Naive thymus-derived CD4-positive, alpha-beta T cell (primary cell): ENCODE measurements at regions of chr17 and their contacts with region 1.

Region 1: GRCh38 chr17:1628856-1629646 is 417 bp upstream of the SLC43A2 start:
- DNase-seq: peak; percentile 69 to 89 (median 84)
- ATAC-seq: peak; percentile 84
- H3K4me3 ChIP-seq: peak overlapping the region; percentile 83
- H3K4me3 Mint-ChIP-seq: peak overlapping the region; percentile 92 to 96 (median 94)
- H3K27ac ChIP-seq: peak overlapping the region; percentile 74
- H3K27ac Mint-ChIP-seq: peak overlapping the region; percentile 73 to 95 (median 87)
- H3K4me1 ChIP-seq: peaks cover 5 to 20% of the 10 kb centered on the region in 2 donors
- H3K4me1 Mint-ChIP-seq: peaks cover 17 to 26% (median 22%) of the 10 kb centered on the region in 7 donors
- H3K27me3 ChIP-seq: no peaks in the 10 kb centered on the region
- H3K27me3 Mint-ChIP-seq: peaks cover 0 to 59% (median 0%) of the 10 kb centered on the region in 5 donors

Region 2: GRCh38 chr17:1399679-1400512 is 229.2 kb before region 1 on chr17 and contains the start of gene YWHAE:
- CTCF ChIA-PET with region 1: no interaction called
- POLR2A ChIA-PET with region 1: no interaction called
- intact Hi-C with region 1: loop called in 1 of 2 experiments (anchors 1 kb)
- DNase-seq: peak; percentile 89 to 97 (median 94)
- ATAC-seq: peak; percentile 93
- H3K4me3 ChIP-seq: peak within 1 kb of the TSS; percentile 100
- H3K4me3 Mint-ChIP-seq: peak within 1 kb of the TSS; percentile 97 to 100 (median 99)
- H3K27ac ChIP-seq: peak within 1 kb of the TSS; percentile 98
- H3K27ac Mint-ChIP-seq: peak within 1 kb of the TSS; percentile 97 to 100 (median 99)
- H3K4me1 ChIP-seq: peaks cover 23 to 24% of the 10 kb centered on the region in 2 donors
- H3K4me1 Mint-ChIP-seq: peaks cover 18 to 45% (median 38%) of the 10 kb centered on the region in 7 donors
- H3K27me3 ChIP-seq: no peaks in the 10 kb centered on the region
- H3K27me3 Mint-ChIP-seq: peaks cover 0 to 6% (median 0%) of the 10 kb centered on the region in 5 donors
- total RNA-seq, gene YWHAE: 119 to 317 (median 127) TPM

Region 3: GRCh38 chr17:1561400-1562175 is 67.5 kb before region 1 on chr17:
- CTCF ChIA-PET with region 1: interaction called, 3 read pairs
- POLR2A ChIA-PET with region 1: interaction called, 8 read pairs
- intact Hi-C with region 1: loop called (anchors 1 kb)
- DNase-seq: peak in 8 of 9 donors; percentile 28 to 58 (median 36)
- ATAC-seq: peak; percentile 37
- H3K4me3 ChIP-seq: peak overlapping the region; percentile 39
- H3K4me3 Mint-ChIP-seq: peak overlapping the region; percentile 73 to 89 (median 82)
- H3K27ac ChIP-seq: peak overlapping the region; percentile 76
- H3K27ac Mint-ChIP-seq: peak overlapping the region in 8 of 9 donors; percentile 54 to 90 (median 76)
- H3K4me1 ChIP-seq: peaks cover 9 to 12% of the 10 kb centered on the region in 2 donors
- H3K4me1 Mint-ChIP-seq: peaks cover 25 to 54% (median 43%) of the 10 kb centered on the region in 7 donors
- H3K27me3 ChIP-seq: no peaks in the 10 kb centered on the region
- H3K27me3 Mint-ChIP-seq: peaks cover 0 to 13% (median 0%) of the 10 kb centered on the region in 5 donors

Region 4: GRCh38 chr17:1643293-1643998 is 14.4 kb after region 1 on chr17:
- CTCF ChIA-PET with region 1: interaction called, 7 read pairs
- POLR2A ChIA-PET with region 1: interaction called, 27 read pairs
- intact Hi-C with region 1: loop called (anchors 1 to 2 kb)
- DNase-seq: peak; percentile 57 to 86 (median 77)
- ATAC-seq: peak; percentile 82
- H3K4me3 ChIP-seq: peak overlapping the region; percentile 60
- H3K4me3 Mint-ChIP-seq: peak overlapping the region in 5 of 10 donors; percentile 75 to 89 (median 81)
- H3K27ac ChIP-seq: no peak overlapping the region
- H3K27ac Mint-ChIP-seq: peak overlapping the region in 1 of 9 donors; percentile 80
- H3K4me1 ChIP-seq: peaks cover 14 to 27% of the 10 kb centered on the region in 2 donors
- H3K4me1 Mint-ChIP-seq: peaks cover 0 to 27% (median 13%) of the 10 kb centered on the region in 7 donors
- H3K27me3 ChIP-seq: no peaks in the 10 kb centered on the region
- H3K27me3 Mint-ChIP-seq: peaks cover 0 to 2% (median 0%) of the 10 kb centered on the region in 5 donors

Region 5: DNA sequence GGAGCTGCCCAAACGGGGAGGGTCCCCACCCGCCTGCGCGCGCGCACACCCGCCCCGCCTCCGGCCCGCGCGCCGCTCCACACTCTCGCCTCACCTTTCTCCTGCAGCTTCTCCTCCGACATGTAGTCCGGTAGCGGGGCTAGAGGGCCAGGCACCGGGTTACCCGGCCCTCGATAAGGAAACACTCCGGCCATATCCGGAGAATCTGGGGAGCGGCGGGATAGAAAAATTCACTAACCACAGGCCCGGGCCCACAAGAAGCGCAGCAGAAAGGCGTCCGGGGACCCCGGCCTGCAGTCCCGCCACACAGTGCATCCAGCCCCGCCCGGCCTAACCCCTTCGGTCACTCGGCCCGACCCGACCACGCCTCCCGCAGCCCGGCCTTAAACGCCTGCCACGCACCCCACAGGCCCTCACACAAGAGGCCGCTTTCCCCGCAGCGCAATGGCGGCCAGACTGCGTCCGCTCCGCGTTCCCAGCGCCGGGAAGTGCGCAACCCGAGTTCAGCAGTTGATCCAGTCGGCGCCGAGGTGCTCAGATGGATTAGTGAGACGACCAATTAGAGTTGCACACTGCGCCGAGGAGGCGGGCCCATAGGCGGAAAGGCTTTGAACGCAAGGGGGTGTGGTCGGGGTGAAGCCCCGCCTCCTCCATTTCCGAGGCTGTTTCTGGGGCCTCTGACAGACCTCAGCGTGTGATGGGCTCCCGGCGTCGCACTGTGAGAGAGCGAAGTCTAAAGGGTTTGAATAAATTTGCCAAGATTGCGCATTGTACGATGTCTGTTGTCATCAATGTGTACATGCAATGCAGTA is 55.5 kb after region 1 on chr17 and contains the start of gene PRPF8:
- CTCF ChIA-PET with region 1: no interaction called
- POLR2A ChIA-PET with region 1: interaction called, 5 read pairs
- intact Hi-C with region 1: loop called in 1 of 2 experiments (anchors 1 kb)
- DNase-seq: peak; percentile 89 to 99 (median 99)
- ATAC-seq: peak; percentile 99
- H3K4me3 ChIP-seq: peak within 1 kb of the TSS; percentile 96
- H3K4me3 Mint-ChIP-seq: peak within 1 kb of the TSS; percentile 89 to 100 (median 97)
- H3K27ac ChIP-seq: peak within 1 kb of the TSS; percentile 100
- H3K27ac Mint-ChIP-seq: peak within 1 kb of the TSS; percentile 95 to 100 (median 98)
- H3K4me1 ChIP-seq: peaks cover 10 to 24% of the 10 kb centered on the region in 2 donors
- H3K4me1 Mint-ChIP-seq: peaks cover 32 to 59% (median 48%) of the 10 kb centered on the region in 7 donors
- H3K27me3 ChIP-seq: no peaks in the 10 kb centered on the region
- H3K27me3 Mint-ChIP-seq: no peaks in the 10 kb centered on the region
- total RNA-seq, gene PRPF8: 388 to 554 (median 460) TPM